Activated CD4-positive, alpha-beta T cell treated with anti-CD3 and anti-CD28 coated beads for 36 hours (primary cell): ENCODE measurements at regions of chr14 and their contacts with region 1.

Region 1: DNA sequence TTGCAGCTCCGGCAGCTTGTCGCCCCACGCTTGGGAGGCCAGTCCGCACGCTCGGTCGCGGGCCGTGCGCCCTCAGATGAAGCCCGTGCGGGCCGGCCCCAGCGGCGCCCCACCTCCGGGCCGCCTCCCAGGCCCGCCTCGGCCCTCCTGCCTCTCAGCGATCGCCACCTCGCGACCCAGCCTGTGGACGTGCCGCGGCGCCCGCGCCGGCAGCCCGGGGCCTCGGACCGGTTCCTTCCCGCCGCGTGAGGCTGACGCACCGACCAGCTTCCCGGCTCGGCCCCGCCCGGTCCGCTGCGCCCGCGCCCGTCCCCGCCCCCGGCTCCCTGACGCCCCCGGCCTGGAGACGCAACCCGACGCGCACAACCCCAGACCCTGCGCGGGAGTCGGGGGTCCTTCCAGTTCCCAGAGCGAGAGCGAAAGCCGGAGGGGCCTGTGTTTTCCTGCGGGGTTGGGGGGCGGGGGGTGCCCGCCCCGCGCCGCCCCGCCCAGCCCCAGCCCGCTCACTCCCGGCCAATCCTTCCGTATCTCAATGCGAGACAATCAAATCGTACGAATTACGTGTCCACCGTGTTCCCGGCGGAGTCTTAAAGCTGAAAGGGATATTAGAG is at the start of gene ERO1A:
- DNase-seq: peak; percentile 89
- ATAC-seq: peak; percentile 82
- H3K4me3 Mint-ChIP-seq: peak within 1 kb of the TSS; percentile 88
- H3K27ac Mint-ChIP-seq: peak within 1 kb of the TSS; percentile 98
- H3K4me1 Mint-ChIP-seq: peaks cover 33% of the 10 kb centered on the region
- H3K27me3 Mint-ChIP-seq: no peaks in the 10 kb centered on the region
- total RNA-seq, gene ERO1A: 120 to 165 TPM

Region 2: DNA sequence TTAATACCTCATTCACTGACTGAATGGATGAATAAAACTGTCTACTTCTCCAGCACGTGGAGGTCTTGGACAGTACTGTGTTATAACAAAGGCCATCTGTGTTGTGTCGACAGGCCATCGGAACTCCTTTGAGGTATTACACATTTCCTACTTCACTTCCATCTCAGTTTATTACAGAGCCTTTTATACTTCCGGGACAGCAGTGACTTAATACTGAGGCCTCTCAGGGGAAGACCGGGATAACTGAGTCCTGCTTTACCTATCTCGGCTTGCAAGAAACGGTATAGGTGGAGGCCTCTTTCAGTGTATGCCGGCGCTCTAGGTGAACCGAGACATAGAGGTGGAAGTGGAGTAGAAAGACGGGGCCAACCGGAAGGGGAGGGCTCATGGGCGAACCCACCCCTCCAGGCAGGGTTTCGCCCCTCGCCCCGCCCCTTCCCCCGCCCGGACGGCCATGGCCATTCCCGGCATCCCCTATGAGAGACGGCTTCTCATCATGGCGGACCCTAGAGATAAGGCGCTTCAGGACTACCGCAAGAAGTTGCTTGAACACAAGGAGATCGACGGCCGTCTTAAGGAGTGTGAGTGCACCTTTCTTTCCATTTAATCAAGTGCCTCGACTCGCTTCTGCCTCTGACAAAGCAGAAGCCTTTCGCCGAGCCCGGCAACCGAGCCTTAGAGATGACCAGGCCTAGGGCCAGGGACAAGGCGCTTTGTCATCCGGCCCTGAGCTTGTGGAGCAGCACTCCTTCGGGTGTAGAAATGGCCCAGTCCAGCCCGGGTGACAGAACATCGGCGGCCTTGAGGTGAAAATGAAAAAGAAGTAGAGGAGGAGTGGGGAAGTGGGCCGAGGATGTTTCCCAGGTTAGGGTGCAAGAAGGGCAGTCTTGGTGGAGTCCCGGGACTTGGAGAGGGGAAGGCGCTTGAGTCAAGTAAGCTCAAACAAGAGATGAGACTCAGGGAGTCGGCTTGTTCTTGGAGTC is 11.4 kb after region 1 on chr14 and contains the start of gene PSMC6:
- CTCF ChIA-PET with region 1: interaction called, 8 read pairs
- POLR2A ChIA-PET with region 1: interaction called, 3 read pairs
- intact Hi-C with region 1: loop called (anchors 1 kb)
- DNase-seq: peak; percentile 98
- ATAC-seq: peak; percentile 96
- H3K4me3 Mint-ChIP-seq: peak within 1 kb of the TSS; percentile 91
- H3K27ac Mint-ChIP-seq: peak within 1 kb of the TSS; percentile 92
- H3K4me1 Mint-ChIP-seq: peaks cover 41% of the 10 kb centered on the region
- H3K27me3 Mint-ChIP-seq: no peaks in the 10 kb centered on the region
- total RNA-seq, gene PSMC6: 87.0 to 121 TPM

Region 3: GRCh38 chr14:52729925-52730667 is 34.5 kb after region 1 on chr14 and contains the start of gene STYX:
- CTCF ChIA-PET with region 1: interaction called, 3 read pairs
- POLR2A ChIA-PET with region 1: no interaction called
- intact Hi-C with region 1: loop called in 1 of 2 experiments (anchors 1 kb)
- DNase-seq: peak; percentile 99
- ATAC-seq: peak; percentile 97
- H3K4me3 Mint-ChIP-seq: peak within 1 kb of the TSS; percentile 93
- H3K27ac Mint-ChIP-seq: peak within 1 kb of the TSS; percentile 90
- H3K4me1 Mint-ChIP-seq: peaks cover 33% of the 10 kb centered on the region
- H3K27me3 Mint-ChIP-seq: no peaks in the 10 kb centered on the region
- total RNA-seq, gene STYX: 13.1 to 13.3 TPM

Region 4: GRCh38 chr14:52741865-52742264 is 46.3 kb after region 1 on chr14:
- CTCF ChIA-PET with region 1: no interaction called
- POLR2A ChIA-PET with region 1: no interaction called
- intact Hi-C with region 1: loop called in 1 of 2 experiments (anchors 2 kb)
- DNase-seq: no peak
- ATAC-seq: no peak
- H3K4me3 Mint-ChIP-seq: peak overlapping the region; percentile 72
- H3K27ac Mint-ChIP-seq: peak overlapping the region; percentile 95
- H3K4me1 Mint-ChIP-seq: peaks cover 65% of the 10 kb centered on the region
- H3K27me3 Mint-ChIP-seq: no peaks in the 10 kb centered on the region